H1 (cell line): ENCODE measurements at regions of chr22 and their contacts with region 1.

Region 1: GRCh38 chr22:44956840-44957767 is 52.7 kb downstream of the PHF21B start:
- DNase-seq: no peak
- H3K4me3 ChIP-seq: peak overlapping the region in 1 of 4 experiments; percentile 11; a peak in 1 of 8 replicates
- H3K27ac ChIP-seq: peak overlapping the region; percentile 30; the same call in 1 of the 2 replicates
- H3K4me1 ChIP-seq: peaks cover 3 to 53% (median 29%) of the 10 kb centered on the region in 4 experiments
- H3K27me3 ChIP-seq: no peaks in the 10 kb centered on the region
- CTCF ChIP-seq: peak in 2 of 3 experiments; percentile 45 to 52; a peak in 3 of 4 replicates
- EP300 ChIP-seq: no peak
- POLR2A ChIP-seq: no peak
- RAD21 ChIP-seq: peak in 1 of 2 experiments; percentile 10; a peak in 1 of 4 replicates

Region 2: DNA sequence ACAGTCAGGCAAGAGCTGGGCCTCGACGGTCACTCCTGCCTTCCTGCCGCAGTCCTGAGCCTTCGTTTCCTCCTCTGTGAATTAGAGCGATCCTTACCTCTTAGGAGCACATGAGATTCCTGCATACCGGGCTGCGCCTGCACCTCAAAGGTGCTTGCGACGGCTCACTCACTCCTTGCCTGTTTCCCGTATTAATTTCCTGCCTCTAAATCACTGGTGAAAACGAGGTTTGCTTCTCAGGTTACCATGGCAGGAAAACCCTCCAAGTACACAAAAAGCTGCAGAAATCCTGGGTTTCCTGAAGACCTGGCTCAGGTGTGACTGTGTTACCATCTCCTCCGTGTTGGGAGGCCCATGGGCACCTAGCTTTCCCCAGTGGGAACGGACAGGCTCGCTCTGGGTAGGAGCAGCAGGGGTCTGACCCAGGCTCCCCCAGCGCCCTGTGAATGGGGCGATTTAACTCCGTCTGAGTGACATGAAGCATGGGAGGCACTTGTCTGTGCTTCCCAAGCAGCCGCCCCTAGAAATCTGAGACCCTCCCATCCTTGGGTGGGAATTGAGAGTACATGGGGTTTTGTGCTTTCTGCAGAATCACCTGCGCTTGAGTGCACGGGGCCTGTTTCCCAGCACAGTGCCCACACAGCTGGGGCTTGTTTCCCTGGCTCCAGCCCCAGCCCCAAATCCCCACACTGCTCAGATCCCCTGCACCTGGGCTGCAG is 12.1 kb before region 1 on chr22:
- CTCF ChIA-PET with region 1: interaction called, 5 read pairs
- POLR2A ChIA-PET with region 1: interaction called, 18 read pairs
- DNase-seq: no peak
- H3K4me3 ChIP-seq: no peak overlapping the region
- H3K27ac ChIP-seq: no peak overlapping the region
- H3K4me1 ChIP-seq: peaks cover 0 to 38% (median 27%) of the 10 kb centered on the region in 4 experiments; a peak in 5 of 7 replicates
- H3K27me3 ChIP-seq: no peaks in the 10 kb centered on the region
- CTCF ChIP-seq: no peak
- EP300 ChIP-seq: no peak
- POLR2A ChIP-seq: no peak
- RAD21 ChIP-seq: no peak

Region 3: DNA sequence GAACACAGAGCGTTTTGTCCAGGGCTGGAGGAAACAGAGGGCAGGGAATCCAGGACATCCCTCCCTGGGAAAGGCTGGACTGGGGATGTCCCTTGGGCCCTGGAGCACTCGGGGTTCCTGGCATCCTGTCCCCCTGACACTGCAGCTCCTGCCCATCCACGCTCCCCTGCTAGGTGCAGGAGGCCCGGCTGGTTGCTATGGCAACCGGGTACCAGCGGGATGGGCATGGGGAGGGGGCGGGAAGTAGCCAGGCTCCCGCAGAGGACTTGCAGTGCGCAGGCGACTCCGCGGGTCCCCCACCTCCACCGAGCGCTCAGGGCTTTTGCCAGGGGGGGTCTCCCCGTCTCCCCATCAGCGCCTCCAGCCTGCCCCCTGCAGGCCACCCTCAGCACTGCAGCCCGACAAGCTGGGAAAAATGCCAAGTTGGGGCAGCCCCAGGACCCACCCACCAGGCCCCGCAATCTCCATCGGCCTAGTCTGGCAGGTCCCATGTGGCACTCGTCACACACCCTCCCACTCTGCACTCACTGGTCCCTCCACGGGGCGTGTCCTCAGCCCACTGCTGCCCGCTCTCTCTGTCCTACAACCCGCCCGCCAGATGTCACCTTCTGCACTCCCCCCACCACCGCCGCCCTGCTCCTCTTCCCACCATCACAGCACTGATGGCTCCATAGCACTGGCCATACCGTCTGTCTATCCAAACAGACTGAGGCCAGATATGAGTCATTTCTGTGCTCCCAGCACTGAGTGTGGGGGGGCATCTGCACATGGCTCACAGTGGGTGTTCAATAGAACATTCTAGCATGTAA is 252.1 kb after region 1 on chr22:
- CTCF ChIA-PET with region 1: no interaction called
- POLR2A ChIA-PET with region 1: no interaction called
- DNase-seq: peak; percentile 43 to 97
- H3K4me3 ChIP-seq: no peak overlapping the region
- H3K27ac ChIP-seq: no peak overlapping the region
- H3K4me1 ChIP-seq: peaks cover 0 to 22% (median 8%) of the 10 kb centered on the region in 4 experiments; a peak in 6 of 7 replicates
- H3K27me3 ChIP-seq: no peaks in the 10 kb centered on the region
- CTCF ChIP-seq: peak; percentile 75 to 85 (median 76)
- EP300 ChIP-seq: no peak
- POLR2A ChIP-seq: no peak
- RAD21 ChIP-seq: peak; percentile 54 to 68